HepG2 (cell line): ENCODE measurements at regions of chr1 and their contacts with region 1.

Region 1: GRCh38 chr1:44826375-44827196 is 16.5 kb downstream of the PTCH2 start:
- DNase-seq: peak; percentile 75
- ATAC-seq: peak; percentile 87
- H3K4me3 ChIP-seq: peak overlapping the region; percentile 37 to 71 (median 54)
- H3K27ac ChIP-seq: peak overlapping the region; percentile 88
- H3K4me1 ChIP-seq: peaks cover 54% of the 10 kb centered on the region
- H3K27me3 ChIP-seq: peaks cover 0 to 2% of the 10 kb centered on the region in 2 experiments; a peak in 1 of 5 replicates
- CTCF ChIP-seq: no peak; the same call in 1 of the 2 replicates
- EP300 ChIP-seq: 0 out of 4 replicates have a peak, but pooled peaks of 1 of the 2 experiments have one; percentile 19
- POLR2A ChIP-seq: peak in 1 of 2 experiments; percentile 65; a peak in 2 of 4 replicates
- RAD21 ChIP-seq: peak; percentile 22; the same call in 1 of the 2 replicates

Region 2: DNA sequence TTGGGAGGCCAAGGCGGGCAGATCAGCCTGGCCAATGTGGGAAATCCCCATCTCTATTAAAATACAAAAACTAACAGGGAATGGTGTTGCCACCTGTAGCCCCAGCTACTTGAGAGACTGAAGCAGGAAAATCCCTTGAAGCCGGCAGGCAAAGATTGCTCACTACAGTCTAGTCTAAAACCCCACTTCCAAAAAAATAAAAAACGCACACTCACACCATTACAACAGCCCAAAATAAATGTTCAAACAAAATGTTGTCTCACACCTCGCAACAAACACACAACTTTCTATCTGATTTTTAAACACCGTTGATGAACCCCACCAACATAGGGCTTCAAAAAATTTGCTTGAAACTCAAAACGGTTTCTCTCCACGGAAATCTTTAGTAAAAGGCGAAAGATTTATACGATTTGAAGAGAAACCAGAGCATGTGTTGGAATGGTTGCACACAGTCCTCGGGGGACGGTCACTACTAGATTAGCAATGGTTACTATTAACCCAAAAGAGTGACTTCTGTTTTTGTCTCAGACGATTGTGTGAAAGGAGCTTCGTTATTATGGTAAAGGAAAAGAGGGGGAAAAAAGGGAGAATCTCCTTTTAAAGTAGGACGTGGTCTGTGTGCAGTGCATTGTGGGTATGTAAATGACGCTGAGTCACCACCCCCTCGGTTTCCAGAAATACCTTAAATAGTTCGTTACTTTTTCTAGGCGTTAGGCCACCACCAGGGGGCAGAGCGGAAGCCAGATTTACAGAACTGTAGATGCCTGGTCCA is 95.7 kb before region 1 on chr1 and contains the start of gene RNU5D-1:
- CTCF ChIA-PET with region 1: no interaction called
- POLR2A ChIA-PET with region 1: interaction called, 18 read pairs
- in situ Hi-C with region 1: no loop called
- intact Hi-C with region 1: no loop called
- DNase-seq: peak; percentile 95
- ATAC-seq: peak; percentile 82
- H3K4me3 ChIP-seq: peak within 1 kb of the TSS; percentile 45 to 62 (median 48)
- H3K27ac ChIP-seq: peak within 1 kb of the TSS; percentile 100
- H3K4me1 ChIP-seq: peaks cover 60% of the 10 kb centered on the region
- H3K27me3 ChIP-seq: no peaks in the 10 kb centered on the region; a peak in 2 of 5 replicates
- CTCF ChIP-seq: peak; percentile 79
- EP300 ChIP-seq: peak in 1 of 2 experiments; percentile 27; a peak in 1 of 4 replicates
- POLR2A ChIP-seq: peak; percentile 97 to 100
- RAD21 ChIP-seq: peak; percentile 59
- total RNA-seq, gene RNU5D-1: 165 TPM in 1 of 2 replicates, not detected in the other

Region 3: DNA sequence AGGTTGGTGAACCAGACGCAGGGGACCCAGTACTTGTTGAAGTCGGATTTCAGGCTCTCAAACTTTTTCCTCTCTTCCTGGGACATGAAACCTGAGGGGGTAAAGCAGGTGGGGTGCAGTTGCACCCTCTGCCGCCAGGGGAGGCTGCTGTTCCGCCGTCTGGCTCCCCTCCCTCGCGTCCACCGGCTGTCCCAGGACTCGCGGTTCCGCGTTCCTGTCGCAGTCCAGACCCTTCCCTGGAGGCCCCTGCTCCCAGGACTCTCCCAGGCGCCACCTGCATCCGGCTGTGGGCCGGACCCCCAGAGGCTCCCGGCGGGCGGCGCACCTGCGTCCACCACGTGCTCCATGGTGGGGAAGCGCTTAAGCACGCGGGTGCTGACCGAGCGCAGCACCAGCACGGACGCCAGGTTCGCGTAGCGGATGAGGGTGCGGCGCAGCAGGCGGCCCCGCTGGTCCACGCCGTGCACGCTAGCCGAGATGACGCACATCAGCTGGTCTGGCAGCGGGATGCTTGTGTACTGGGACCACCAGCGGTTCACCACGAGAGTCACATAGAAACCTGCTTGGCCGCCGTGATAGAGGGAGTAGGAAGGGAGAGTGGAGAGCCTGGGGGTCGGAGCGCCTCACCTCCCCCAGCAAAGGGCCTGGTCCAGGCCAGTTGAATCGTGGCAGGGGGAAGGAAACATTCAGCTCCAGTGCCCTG is 40.3 kb before region 1 on chr1:
- CTCF ChIA-PET with region 1: no interaction called
- POLR2A ChIA-PET with region 1: interaction called, 13 read pairs
- in situ Hi-C with region 1: loop called (anchors 5 kb)
- intact Hi-C with region 1: no loop called
- DNase-seq: peak; percentile 60
- ATAC-seq: peak; percentile 23
- H3K4me3 ChIP-seq: peak overlapping the region in 2 of 3 experiments; percentile 34 to 79; a peak in 3 of 6 replicates
- H3K27ac ChIP-seq: no peak overlapping the region
- H3K4me1 ChIP-seq: peaks cover 61% of the 10 kb centered on the region
- H3K27me3 ChIP-seq: peaks cover 3 to 17% of the 10 kb centered on the region in 2 experiments; a peak in 2 of 5 replicates
- CTCF ChIP-seq: peak; percentile 91
- EP300 ChIP-seq: peak; percentile 9 to 62; a peak in 1 of 4 replicates
- POLR2A ChIP-seq: no peak; a peak in 1 of 4 replicates
- RAD21 ChIP-seq: peak; percentile 87

Region 4: DNA sequence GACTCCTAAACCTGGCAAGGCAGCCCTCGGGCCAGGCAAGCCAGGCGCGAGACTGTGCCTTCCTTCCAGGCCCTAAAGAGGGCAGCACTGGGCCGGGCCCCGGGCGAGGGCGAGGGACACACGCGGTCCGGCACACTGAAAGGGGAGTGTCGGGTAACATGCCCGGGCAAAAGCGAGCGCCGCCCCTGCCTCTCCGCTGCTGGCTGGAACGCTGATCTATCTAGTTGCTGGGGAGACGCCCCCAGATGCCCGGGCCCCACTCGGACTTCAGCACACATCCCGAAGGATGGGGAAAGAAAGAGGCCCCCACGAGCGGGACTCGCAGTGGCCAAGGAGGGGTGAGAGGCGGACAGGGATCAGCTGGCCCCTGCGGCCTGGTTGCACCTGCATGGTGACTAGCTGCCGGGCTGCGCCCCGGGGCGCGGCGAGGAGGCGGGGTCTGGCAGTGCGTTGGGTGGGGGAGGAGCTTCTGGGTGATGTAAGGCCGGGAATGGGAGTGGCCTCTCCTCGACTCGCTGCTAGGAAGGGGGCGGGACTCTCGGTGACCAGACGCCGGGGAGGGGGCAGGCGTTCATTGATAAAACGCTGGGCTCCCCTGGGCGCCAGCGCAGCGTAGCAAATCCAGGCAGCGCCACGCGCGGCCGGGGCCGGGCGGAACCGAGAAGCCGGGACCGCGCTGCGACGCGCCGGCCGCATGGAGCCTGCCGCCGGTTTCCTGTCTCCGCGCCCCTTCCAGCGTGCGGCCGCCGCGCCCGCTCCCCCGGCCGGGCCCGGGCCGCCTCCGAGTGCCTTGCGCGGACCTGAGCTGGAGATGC is 26.6 kb before region 1 on chr1 and contains the start of gene PLK3:
- CTCF ChIA-PET with region 1: no interaction called
- POLR2A ChIA-PET with region 1: interaction called, 570 read pairs
- in situ Hi-C with region 1: no loop called
- intact Hi-C with region 1: no loop called
- DNase-seq: peak; percentile 92
- ATAC-seq: peak; percentile 86
- H3K4me3 ChIP-seq: peak within 1 kb of the TSS; percentile 69 to 91 (median 90)
- H3K27ac ChIP-seq: peak within 1 kb of the TSS; percentile 94
- H3K4me1 ChIP-seq: peaks cover 44% of the 10 kb centered on the region
- H3K27me3 ChIP-seq: no peaks in the 10 kb centered on the region
- CTCF ChIP-seq: peak; percentile 98
- EP300 ChIP-seq: peak; percentile 13 to 54; a peak in 1 of 4 replicates
- POLR2A ChIP-seq: peak in 1 of 2 experiments; percentile 92; a peak in 2 of 4 replicates
- RAD21 ChIP-seq: peak; percentile 92
- total RNA-seq, gene PLK3: 4.5 and 9.8 TPM in 2 replicates

Region 5: DNA sequence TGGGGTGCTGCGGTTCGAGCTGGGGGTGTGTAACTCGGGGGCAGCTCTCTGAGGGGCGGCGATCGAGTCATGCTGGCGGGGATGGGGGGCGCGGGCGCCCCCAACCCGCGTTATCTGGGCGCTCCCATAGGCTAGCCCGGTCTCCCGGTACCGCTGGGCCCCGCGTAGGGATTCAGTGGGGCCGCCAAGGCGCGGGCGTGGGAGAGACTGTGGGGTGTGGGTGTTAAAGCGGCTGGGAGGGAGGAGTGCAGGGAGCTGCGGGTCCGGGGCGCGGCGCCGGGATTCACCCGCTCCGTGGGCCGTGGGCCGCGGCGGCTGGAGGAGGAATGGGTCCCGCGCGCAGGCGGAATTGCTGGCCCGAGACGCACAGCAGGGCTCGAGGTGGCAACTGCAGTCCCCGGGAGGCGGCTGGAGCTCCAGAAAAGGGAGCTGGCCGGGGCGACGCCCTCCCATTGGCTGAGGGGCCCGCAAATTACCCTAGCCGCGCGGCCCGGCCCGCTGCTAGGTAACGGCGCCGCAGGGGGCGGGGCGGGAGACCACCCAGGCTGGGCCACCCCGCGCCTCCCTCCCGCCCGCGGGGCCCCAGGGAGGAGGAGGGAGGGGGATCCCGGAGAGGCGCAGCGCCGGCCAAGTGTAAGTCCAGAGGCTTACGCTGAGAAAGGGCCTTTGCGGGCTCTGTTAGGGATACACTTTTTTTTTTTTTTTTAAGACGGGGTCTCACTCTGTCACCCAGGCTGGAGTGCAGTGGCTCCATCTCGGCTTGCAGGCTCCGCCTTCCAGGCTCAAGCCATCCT is 16.5 kb after region 1 on chr1 and contains the start of gene PTCH2:
- CTCF ChIA-PET with region 1: no interaction called
- POLR2A ChIA-PET with region 1: interaction called, 13 read pairs
- in situ Hi-C with region 1: no loop called
- intact Hi-C with region 1: no loop called
- DNase-seq: peak; percentile 55
- ATAC-seq: peak; percentile 92
- H3K4me3 ChIP-seq: peak within 1 kb of the TSS; percentile 57 to 73 (median 62)
- H3K27ac ChIP-seq: no peak within 1 kb of the TSS
- H3K4me1 ChIP-seq: peaks cover 36% of the 10 kb centered on the region
- H3K27me3 ChIP-seq: no peaks in the 10 kb centered on the region
- CTCF ChIP-seq: no peak
- EP300 ChIP-seq: no peak
- POLR2A ChIP-seq: no peak
- RAD21 ChIP-seq: no peak
- total RNA-seq, gene PTCH2: 0.18 and 0.60 TPM in 2 replicates

Region 6: DNA sequence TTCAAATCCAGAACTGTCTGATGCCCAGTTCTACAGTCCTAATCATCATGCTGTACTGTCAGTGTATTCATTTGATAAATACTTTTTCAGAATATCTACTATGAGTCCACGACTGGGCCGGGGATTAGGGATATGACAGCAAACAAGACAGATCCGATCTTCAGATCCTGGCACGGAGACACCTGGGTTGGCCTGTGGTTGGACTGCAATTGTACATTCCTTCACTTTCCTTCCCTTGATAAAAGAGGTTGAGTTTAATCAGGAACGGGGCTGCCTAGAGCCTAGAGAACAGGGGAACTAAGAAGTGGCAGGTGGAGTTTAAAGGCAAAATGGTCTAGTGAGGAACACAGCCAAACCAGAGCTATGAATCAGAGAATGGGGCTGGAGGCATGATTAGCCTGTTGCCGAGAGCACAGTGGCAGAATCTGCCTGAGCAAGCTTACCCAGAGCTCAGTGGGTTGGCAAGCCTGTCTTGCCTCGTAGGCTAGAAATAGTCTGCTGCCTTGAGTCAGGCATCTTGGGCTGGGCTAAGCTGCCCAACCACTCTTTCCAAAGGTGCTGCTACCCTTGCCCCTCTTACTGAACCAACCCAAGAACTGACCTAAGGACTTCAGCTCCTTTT is 54.5 kb after region 1 on chr1:
- CTCF ChIA-PET with region 1: no interaction called
- POLR2A ChIA-PET with region 1: no interaction called
- in situ Hi-C with region 1: no loop called
- intact Hi-C with region 1: no loop called
- DNase-seq: no peak
- ATAC-seq: no peak
- H3K4me3 ChIP-seq: no peak overlapping the region
- H3K27ac ChIP-seq: no peak overlapping the region
- H3K4me1 ChIP-seq: no peaks in the 10 kb centered on the region
- H3K27me3 ChIP-seq: no peaks in the 10 kb centered on the region
- CTCF ChIP-seq: no peak
- EP300 ChIP-seq: no peak
- POLR2A ChIP-seq: no peak
- RAD21 ChIP-seq: no peak

Region 7: GRCh38 chr1:45339789-45340570 is 513.4 kb after region 1 on chr1 and contains the starts of genes MUTYH and TOE1:
- CTCF ChIA-PET with region 1: no interaction called
- POLR2A ChIA-PET with region 1: interaction called, 11 read pairs
- in situ Hi-C with region 1: no loop called
- intact Hi-C with region 1: no loop called
- DNase-seq: peak; percentile 87
- ATAC-seq: peak; percentile 86
- H3K4me3 ChIP-seq: peak within 1 kb of the TSS; percentile 68 to 83 (median 80)
- H3K27ac ChIP-seq: peak within 1 kb of the TSS; percentile 91
- H3K4me1 ChIP-seq: peaks cover 59% of the 10 kb centered on the region
- H3K27me3 ChIP-seq: no peaks in the 10 kb centered on the region; a peak in 1 of 5 replicates
- CTCF ChIP-seq: peak; percentile 24; the same call in 1 of the 2 replicates
- EP300 ChIP-seq: no peak
- POLR2A ChIP-seq: peak; percentile 87 to 90
- RAD21 ChIP-seq: peak; percentile 56
- total RNA-seq, gene MUTYH: 12.7 and 17.1 TPM in 2 replicates
- total RNA-seq, gene TOE1: 17.4 and 19.0 TPM in 2 replicates